Activated T-helper 2 cell treated with anti-CD3 and anti-CD28 coated beads, Interferon-gamma antibody, Interleukin-2, Interleukin-4, amounts not matched to agents 10 μg/mL and 5 μg/mL and 100 μg/mL, durations not matched to agents 14 hours and 24 hours and 36 hours (primary cell): ENCODE measurements at regions of chr3 and their contacts with region 1.

Region 1: GRCh38 chr3:97579365-97579764 is 185.2 kb upstream of the ARL6 start:
- DNase-seq: no peak
- H3K4me3 Mint-ChIP-seq: no peak overlapping the region
- H3K27ac Mint-ChIP-seq: no peak overlapping the region
- H3K4me1 Mint-ChIP-seq: no peaks in the 10 kb centered on the region
- H3K27me3 Mint-ChIP-seq: no peaks in the 10 kb centered on the region

Region 2: DNA sequence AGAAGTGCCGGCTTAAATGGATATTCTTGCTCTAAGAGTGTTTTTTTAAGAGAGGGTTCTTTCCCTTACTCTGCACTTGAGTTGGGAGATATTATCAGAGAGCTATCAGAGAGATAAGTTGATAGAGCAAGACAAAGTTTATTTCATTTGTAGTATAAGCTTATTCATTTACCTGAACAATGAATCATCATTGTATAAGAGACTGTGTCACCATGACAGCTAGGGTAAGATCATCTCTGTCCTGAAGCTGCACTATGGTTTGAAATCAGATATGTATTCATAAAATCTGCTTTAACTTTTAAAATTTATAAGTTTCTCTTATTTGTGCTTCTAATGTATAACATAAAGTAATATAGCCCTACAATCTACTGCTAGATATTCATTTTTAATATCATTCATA is 57.1 kb after region 1 on chr3:
- intact Hi-C with region 1: loop called (anchors 10 kb)
- DNase-seq: no peak
- H3K4me3 Mint-ChIP-seq: no peak overlapping the region
- H3K27ac Mint-ChIP-seq: no peak overlapping the region
- H3K4me1 Mint-ChIP-seq: no peaks in the 10 kb centered on the region
- H3K27me3 Mint-ChIP-seq: no peaks in the 10 kb centered on the region

Region 3: DNA sequence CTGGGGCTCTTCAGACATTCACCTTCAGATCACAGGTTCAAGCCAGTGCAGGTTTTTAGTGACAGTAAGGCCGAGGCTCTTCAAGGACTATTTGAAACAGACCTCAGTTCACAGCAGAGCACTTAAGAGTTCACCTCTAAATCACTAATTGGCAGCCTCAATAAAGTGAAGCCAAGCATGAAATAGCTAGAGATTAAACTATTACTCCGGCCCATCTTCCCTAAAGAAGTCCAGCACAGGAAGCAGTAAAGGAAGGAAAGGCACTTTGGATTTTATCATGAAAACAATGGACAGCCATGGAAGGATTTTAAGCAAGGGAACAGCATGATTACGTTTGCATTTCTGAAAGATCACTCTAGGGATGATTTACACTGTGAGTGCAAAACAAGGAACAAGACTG is 157.6 kb after region 1 on chr3:
- intact Hi-C with region 1: no loop called
- DNase-seq: no peak
- H3K4me3 Mint-ChIP-seq: no peak overlapping the region
- H3K27ac Mint-ChIP-seq: no peak overlapping the region
- H3K4me1 Mint-ChIP-seq: no peaks in the 10 kb centered on the region
- H3K27me3 Mint-ChIP-seq: peaks cover 16% of the 10 kb centered on the region